ENCODE measurements at regions of chr16 and their contacts with region 1.

Region 1: GRCh38 chr16:69310653-69311532 is at the start of gene VPS4A:
- DNase-seq: peak; percentile 98
- H3K4me3 Mint-ChIP-seq: peak within 1 kb of the TSS; percentile 94
- H3K27ac Mint-ChIP-seq: peak within 1 kb of the TSS; percentile 84
- H3K4me1 Mint-ChIP-seq: peaks cover 31% of the 10 kb centered on the region
- H3K27me3 Mint-ChIP-seq: no peaks in the 10 kb centered on the region
- total RNA-seq, gene VPS4A: 34.3 to 35.8 TPM

Region 2: DNA sequence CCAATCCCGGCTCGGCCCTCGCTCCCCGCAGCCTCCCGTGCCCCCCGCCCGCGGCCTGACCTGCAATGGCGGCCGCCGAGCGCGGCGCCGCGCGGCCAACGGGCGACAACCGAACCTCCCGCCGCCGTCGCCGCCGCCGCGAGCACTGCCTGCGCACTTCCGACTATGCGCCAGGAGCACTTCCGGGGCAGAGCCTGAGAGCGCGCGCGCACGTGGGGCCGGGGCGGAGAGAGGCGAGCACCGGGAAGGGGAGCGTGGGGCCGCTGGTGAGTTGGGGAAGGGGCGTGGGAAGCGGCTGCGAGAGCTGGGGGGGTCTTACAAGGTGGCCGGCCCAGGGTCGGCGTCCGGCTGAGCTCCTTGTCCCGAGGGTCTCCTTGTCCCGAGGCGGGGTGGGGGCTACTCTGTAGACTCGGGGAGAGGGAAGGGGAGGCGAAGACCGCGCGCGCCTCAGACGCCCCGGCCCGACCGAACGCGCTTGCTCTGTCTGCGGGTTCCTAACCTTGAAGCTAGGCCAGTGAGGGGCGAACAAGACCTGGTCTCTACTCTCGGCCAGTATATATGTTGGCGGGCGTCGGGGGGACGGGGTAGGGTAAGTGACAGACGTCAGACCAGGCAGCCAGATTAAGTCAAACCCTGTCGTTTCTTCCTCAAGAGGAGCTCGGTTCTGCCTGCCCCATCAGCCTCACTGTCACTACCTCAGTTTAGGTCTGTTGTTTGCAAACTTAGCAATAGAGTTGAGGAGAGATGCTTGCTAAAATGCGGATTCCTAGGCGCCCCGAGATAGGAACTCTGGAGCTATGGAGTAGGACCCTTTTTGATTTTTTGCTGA is 178.3 kb before region 1 on chr16 and contains the starts of genes CHTF8 and UTP4:
- CTCF ChIA-PET with region 1: interaction called, 5 read pairs
- intact Hi-C with region 1: loop called (anchors 1 kb)
- DNase-seq: peak; percentile 89
- H3K4me3 Mint-ChIP-seq: peak within 1 kb of the TSS; percentile 96
- H3K27ac Mint-ChIP-seq: peak within 1 kb of the TSS; percentile 90
- H3K4me1 Mint-ChIP-seq: peaks cover 59% of the 10 kb centered on the region
- H3K27me3 Mint-ChIP-seq: no peaks in the 10 kb centered on the region
- total RNA-seq, gene CHTF8: 114 to 117 TPM
- total RNA-seq, gene UTP4: 62.6 to 69.8 TPM

Region 3: DNA sequence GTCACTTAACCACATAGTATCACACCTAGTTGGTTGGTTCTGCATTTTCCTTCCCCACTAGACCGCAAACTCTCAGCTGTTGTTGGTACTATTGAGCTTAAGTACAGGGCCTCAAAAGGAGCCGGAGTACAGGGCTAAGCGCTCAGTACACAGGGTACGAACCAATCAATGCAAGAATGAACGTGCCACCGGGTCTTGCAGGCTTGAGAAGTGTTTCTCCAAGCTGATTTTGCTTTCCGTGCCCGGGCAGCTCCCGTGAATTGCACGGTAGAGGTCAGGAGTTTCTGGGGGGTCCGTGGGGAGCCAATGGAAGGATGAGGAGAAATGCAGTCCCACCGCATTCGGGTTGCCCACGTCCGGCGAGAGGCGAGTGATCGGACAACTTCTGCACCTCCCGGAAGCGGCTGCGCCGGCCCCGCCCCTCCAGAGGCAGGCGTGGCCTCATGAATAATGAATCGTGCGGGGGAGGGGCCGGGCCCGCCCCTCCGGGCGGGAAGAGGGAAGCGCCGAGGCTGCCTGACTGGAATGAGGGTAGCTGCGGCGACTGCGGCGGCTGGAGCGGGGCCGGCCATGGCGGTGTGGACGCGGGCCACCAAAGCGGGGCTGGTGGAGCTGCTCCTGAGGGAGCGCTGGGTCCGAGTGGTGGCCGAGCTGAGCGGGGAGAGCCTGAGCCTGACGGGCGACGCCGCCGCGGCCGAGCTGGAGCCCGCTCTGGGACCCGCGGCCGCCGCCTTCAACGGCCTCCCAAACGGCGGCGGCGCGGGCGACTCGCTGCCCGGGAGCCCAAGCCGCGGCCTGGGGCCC is 124.0 kb before region 1 on chr16 and contains the start of gene SNTB2:
- CTCF ChIA-PET with region 1: no interaction called
- intact Hi-C with region 1: loop called (anchors 1 kb)
- DNase-seq: peak; percentile 86
- H3K4me3 Mint-ChIP-seq: peak within 1 kb of the TSS; percentile 91
- H3K27ac Mint-ChIP-seq: peak within 1 kb of the TSS; percentile 83
- H3K4me1 Mint-ChIP-seq: peaks cover 42% of the 10 kb centered on the region
- H3K27me3 Mint-ChIP-seq: no peaks in the 10 kb centered on the region
- total RNA-seq, gene SNTB2: 7.3 to 7.8 TPM

Region 4: GRCh38 chr16:69330286-69331109 is 19.6 kb after region 1 on chr16 and contains the start of gene PDF:
- CTCF ChIA-PET with region 1: interaction called, 3 read pairs
- intact Hi-C with region 1: loop called (anchors 1 kb)
- DNase-seq: peak; percentile 86
- H3K4me3 Mint-ChIP-seq: peak within 1 kb of the TSS; percentile 86
- H3K27ac Mint-ChIP-seq: peak within 1 kb of the TSS; percentile 85
- H3K4me1 Mint-ChIP-seq: peaks cover 53% of the 10 kb centered on the region
- H3K27me3 Mint-ChIP-seq: no peaks in the 10 kb centered on the region
- total RNA-seq, gene PDF: 12.3 to 13.9 TPM

Region 5: GRCh38 chr16:69339289-69340108 is 28.6 kb after region 1 on chr16 and contains the starts of genes COG8 and NIP7:
- CTCF ChIA-PET with region 1: interaction called, 3 read pairs
- intact Hi-C with region 1: loop called (anchors 1 kb)
- DNase-seq: peak; percentile 96
- H3K4me3 Mint-ChIP-seq: peak within 1 kb of the TSS; percentile 98
- H3K27ac Mint-ChIP-seq: peak within 1 kb of the TSS; percentile 95
- H3K4me1 Mint-ChIP-seq: peaks cover 53% of the 10 kb centered on the region
- H3K27me3 Mint-ChIP-seq: no peaks in the 10 kb centered on the region
- total RNA-seq, gene COG8: 21.0 to 22.6 TPM
- total RNA-seq, gene NIP7: 35.3 to 36.8 TPM

Region 6: DNA sequence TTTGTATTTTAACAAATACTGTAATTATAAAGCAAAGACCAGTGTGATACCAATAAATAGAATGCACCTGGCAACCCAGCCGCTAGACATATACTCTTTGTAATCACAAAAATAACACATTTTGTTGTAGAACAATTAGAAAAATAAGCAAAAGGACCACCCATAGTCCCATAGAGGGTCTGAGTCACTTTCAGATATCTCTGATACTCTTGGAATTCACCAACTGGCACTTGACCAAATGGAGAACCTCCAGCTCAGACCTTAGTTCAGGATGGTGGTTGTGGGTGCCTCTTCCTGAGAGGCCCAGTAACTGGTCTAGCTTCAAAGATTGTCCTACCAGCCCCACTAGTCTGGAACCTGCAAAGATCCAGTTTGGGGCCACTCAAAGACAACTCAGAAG is 75.7 kb after region 1 on chr16:
- CTCF ChIA-PET with region 1: no interaction called
- intact Hi-C with region 1: loop called (anchors 1 kb)
- DNase-seq: no peak
- H3K4me3 Mint-ChIP-seq: peak overlapping the region; percentile 97
- H3K27ac Mint-ChIP-seq: peak overlapping the region; percentile 92
- H3K4me1 Mint-ChIP-seq: peaks cover 29% of the 10 kb centered on the region
- H3K27me3 Mint-ChIP-seq: no peaks in the 10 kb centered on the region

Region 7: DNA sequence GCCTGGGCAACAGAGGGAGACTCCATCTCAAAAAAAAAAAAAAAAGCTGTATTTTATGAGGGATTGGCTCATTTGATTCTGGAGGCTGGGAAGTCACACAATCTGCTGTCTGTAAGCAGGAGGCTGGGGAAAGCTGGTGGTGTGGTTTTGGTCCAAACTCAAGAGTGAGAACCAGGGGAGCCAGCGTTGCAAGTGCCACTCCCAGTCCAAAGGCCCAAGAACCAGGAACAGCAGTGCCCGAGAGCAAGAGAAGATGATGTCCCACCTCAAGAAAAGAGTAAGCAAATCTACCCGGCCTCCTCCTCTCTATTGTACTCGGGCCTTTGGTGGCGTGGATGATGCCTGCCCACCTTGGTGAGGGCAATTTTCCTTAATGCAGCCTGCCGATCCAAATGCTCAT is 421.2 kb after region 1 on chr16:
- CTCF ChIA-PET with region 1: no interaction called
- intact Hi-C with region 1: no loop called
- DNase-seq: no peak
- H3K4me3 Mint-ChIP-seq: no peak overlapping the region
- H3K27ac Mint-ChIP-seq: no peak overlapping the region
- H3K4me1 Mint-ChIP-seq: peaks cover 8% of the 10 kb centered on the region
- H3K27me3 Mint-ChIP-seq: no peaks in the 10 kb centered on the region

Measured in activated naive CD4-positive, alpha-beta T cell treated with anti-CD3 and anti-CD28 coated beads for 36 hours (primary cell).